Activated naive CD4-positive, alpha-beta T cell treated with anti-CD3 and anti-CD28 coated beads for 36 hours (primary cell): ENCODE measurements at regions of chr14 and their contacts with region 1.

Region 1: DNA sequence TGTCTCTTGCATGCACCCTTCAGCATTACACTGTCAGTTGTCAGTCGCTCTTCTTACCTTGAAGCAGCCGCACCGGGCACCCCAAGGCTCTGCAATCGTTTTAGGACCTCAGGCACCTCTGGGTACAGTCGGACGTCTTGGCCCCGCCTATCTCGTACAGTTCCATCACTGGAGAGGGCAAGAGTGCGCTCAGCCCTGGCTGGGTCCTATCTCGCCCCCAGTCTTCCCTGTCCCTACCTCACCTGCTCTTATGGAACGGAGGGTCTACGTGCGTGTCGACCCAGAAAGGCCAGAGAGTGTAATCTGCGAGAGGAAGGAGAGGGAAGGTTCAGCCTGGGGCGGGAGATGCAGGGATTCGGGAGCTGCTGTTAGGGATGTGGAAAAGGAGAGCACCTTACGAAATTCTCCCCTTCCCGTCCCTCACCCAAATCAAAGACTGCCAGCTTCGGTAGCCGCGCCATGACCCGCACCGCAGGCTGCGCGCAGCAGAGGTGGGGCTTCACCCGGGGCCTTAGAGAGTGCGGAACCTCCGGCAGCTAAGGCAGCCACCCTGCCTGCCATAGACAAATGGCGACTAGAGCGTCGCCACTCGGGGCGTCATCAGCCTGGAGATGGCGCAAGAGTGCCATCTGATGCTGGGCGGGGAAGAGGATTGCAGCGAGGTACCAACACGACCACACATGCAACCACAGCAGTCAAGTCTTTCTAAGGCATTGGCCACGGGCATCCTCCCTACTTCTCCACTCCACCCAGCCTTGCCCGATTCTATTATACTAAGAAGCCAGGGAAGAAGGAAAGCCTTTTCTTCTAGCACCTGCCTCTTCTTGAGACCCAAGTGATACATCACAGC is at the start of gene MDP1:
- DNase-seq: peak; percentile 93
- H3K4me3 Mint-ChIP-seq: peak within 1 kb of the TSS; percentile 86
- H3K27ac Mint-ChIP-seq: peak within 1 kb of the TSS; percentile 96
- H3K4me1 Mint-ChIP-seq: peaks cover 45% of the 10 kb centered on the region
- H3K27me3 Mint-ChIP-seq: no peaks in the 10 kb centered on the region
- total RNA-seq, gene MDP1: 10.2 to 13.6 TPM

Region 2: GRCh38 chr14:24141097-24141880 is 74.4 kb before region 1 on chr14 and contains the start of gene EMC9:
- CTCF ChIA-PET with region 1: no interaction called
- intact Hi-C with region 1: loop called (anchors 1 kb)
- DNase-seq: peak; percentile 100
- H3K4me3 Mint-ChIP-seq: peak within 1 kb of the TSS; percentile 99
- H3K27ac Mint-ChIP-seq: peak within 1 kb of the TSS; percentile 93
- H3K4me1 Mint-ChIP-seq: peaks cover 73% of the 10 kb centered on the region
- H3K27me3 Mint-ChIP-seq: no peaks in the 10 kb centered on the region
- total RNA-seq, gene EMC9: 38.4 to 38.9 TPM

Region 3: GRCh38 chr14:24188251-24189058 is 27.3 kb before region 1 on chr14 and contains the start of gene IPO4:
- CTCF ChIA-PET with region 1: interaction called, 6 read pairs
- intact Hi-C with region 1: loop called (anchors 1 kb)
- DNase-seq: peak; percentile 97
- H3K4me3 Mint-ChIP-seq: peak within 1 kb of the TSS; percentile 85
- H3K27ac Mint-ChIP-seq: peak within 1 kb of the TSS; percentile 78
- H3K4me1 Mint-ChIP-seq: peaks cover 46% of the 10 kb centered on the region
- H3K27me3 Mint-ChIP-seq: no peaks in the 10 kb centered on the region
- total RNA-seq, gene IPO4: 64.2 to 74.5 TPM

Region 4: DNA sequence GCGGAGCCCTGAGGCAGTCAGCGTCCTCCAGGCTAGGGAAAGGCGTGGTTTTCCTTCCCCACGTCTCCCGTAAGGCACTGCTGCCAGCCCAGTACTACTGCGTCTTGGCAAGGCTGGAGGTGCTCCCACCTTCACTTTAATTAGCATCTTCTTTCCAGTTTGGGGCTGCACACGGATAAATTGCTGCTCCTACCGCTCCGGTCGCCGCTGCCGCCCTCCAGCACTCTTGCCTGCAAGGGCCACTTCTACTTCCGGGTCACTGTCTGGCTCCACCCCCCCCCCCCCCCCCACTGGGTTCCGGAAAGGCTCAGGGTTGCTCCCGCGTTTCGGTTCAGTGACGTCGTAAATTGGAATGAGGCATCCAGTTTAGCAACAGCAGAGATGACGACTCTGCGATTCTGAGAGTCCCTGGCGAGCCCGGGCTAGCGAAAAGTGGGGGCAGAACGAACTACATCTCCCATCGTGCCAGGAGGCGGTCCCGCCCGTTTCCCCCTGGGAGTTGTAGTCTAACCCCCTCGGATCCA is 16.5 kb after region 1 on chr14 and contains the start of gene NEDD8:
- CTCF ChIA-PET with region 1: interaction called, 5 read pairs
- intact Hi-C with region 1: loop called (anchors 1 kb)
- DNase-seq: peak; percentile 96
- H3K4me3 Mint-ChIP-seq: peak within 1 kb of the TSS; percentile 98
- H3K27ac Mint-ChIP-seq: peak within 1 kb of the TSS; percentile 97
- H3K4me1 Mint-ChIP-seq: peaks cover 52% of the 10 kb centered on the region
- H3K27me3 Mint-ChIP-seq: no peaks in the 10 kb centered on the region
- total RNA-seq, gene NEDD8: 172 to 196 TPM

Region 5: GRCh38 chr14:24317141-24317928 is 101.6 kb after region 1 on chr14:
- CTCF ChIA-PET with region 1: no interaction called
- intact Hi-C with region 1: no loop called
- DNase-seq: no peak
- H3K4me3 Mint-ChIP-seq: no peak overlapping the region
- H3K27ac Mint-ChIP-seq: no peak overlapping the region
- H3K4me1 Mint-ChIP-seq: peaks cover 45% of the 10 kb centered on the region
- H3K27me3 Mint-ChIP-seq: no peaks in the 10 kb centered on the region

Region 6: GRCh38 chr14:24332268-24332993 is 116.7 kb after region 1 on chr14:
- CTCF ChIA-PET with region 1: interaction called, 5 read pairs
- intact Hi-C with region 1: loop called (anchors 1 kb)
- DNase-seq: peak; percentile 91
- H3K4me3 Mint-ChIP-seq: peak overlapping the region; percentile 71
- H3K27ac Mint-ChIP-seq: no peak overlapping the region
- H3K4me1 Mint-ChIP-seq: peaks cover 28% of the 10 kb centered on the region
- H3K27me3 Mint-ChIP-seq: peaks cover 24% of the 10 kb centered on the region